A673 (cell line): ENCODE measurements at regions of chr12 and their contacts with region 1.

Region 1: DNA sequence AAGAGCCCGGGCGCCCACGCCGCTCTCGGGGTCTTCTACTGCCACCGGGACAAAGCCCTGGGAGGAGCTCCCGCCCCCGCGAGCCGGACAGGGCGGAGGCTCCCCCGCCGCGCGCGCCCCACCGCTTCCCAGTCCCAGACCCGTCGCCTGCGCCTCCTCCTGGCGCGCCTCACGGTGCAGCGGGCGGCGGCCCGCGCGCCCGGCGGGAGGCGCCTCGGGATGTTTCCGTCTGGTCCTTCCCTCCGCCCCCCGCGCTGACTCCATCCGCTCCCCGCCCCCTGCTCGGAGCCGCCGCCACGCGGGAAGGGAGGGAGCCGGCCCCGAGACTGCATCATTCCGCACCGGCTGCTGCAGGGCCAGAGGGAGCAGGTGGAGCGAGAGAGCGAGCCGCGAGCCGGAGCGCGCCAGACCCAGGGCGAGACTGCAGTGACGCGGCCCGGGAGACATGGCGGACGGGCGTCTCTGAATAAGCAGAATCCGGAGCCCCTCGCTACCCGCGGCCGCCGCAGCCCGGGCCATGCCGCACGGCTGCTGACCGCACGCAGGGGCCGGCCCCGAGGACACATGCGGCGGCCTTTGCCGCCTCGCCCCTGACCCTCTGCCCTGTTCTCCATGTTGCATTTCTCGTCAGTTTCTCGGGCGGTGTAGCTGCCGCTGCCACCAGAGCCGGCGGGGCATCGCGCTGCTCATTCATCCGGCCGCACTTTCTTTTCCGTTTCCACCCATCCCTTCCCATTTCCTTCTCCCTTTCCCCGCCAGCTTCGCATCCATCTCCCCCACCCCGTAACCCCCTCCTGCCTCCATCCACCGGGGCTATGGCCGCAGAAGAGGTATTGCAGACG is at the start of gene BICD1:
- DNase-seq: peak; percentile 93
- H3K4me3 ChIP-seq: peak within 1 kb of the TSS; percentile 79
- H3K27ac ChIP-seq: peak within 1 kb of the TSS; percentile 80
- H3K4me1 ChIP-seq: peaks cover 18% of the 10 kb centered on the region
- H3K27me3 ChIP-seq: no peaks in the 10 kb centered on the region
- CTCF ChIP-seq: peak; percentile 29
- total RNA-seq, gene BICD1: 45.4 and 50.2 TPM in 2 replicates

Region 2: GRCh38 chr12:31574803-31575575 is 531.7 kb before region 1 on chr12:
- CTCF ChIA-PET with region 1: no interaction called
- POLR2A ChIA-PET with region 1: no interaction called
- intact Hi-C with region 1: no loop called
- DNase-seq: no peak
- H3K4me3 ChIP-seq: no peak overlapping the region
- H3K27ac ChIP-seq: no peak overlapping the region
- H3K4me1 ChIP-seq: peaks cover 5% of the 10 kb centered on the region
- H3K27me3 ChIP-seq: no peaks in the 10 kb centered on the region
- CTCF ChIP-seq: no peak

Region 3: DNA sequence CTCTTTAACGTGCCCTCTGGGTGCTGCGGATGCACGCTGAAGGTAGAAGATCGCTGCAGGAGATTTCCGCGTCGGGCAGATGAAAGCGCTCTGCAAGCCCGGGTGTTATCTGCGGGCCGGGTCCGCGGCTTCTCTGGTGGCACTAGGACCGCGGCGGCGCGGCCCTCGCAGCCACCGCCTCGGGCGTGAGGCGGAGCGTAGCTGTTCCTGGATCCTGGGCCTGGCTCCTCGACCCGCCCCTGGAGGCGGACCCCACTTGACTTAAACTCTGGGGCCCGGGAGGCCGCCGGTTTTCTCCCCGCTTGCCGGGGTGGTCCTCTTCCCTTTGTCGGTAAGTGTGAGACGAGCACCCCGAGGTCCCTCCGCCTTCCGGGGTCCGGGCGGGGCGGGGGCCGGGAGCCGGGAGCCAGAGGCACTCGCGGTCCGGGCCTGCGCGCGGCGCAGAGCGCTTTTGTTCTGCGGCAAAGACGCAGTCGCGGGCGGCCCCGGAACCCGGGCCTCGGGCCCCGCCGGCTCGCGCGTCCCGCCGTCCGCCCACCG is 147.5 kb before region 1 on chr12 and contains the start of gene RESF1:
- CTCF ChIA-PET with region 1: no interaction called
- POLR2A ChIA-PET with region 1: no interaction called
- intact Hi-C with region 1: loop called (anchors 10 kb)
- DNase-seq: peak; percentile 95
- H3K4me3 ChIP-seq: peak within 1 kb of the TSS; percentile 60
- H3K27ac ChIP-seq: peak within 1 kb of the TSS; percentile 85
- H3K4me1 ChIP-seq: peaks cover 22% of the 10 kb centered on the region
- H3K27me3 ChIP-seq: no peaks in the 10 kb centered on the region
- CTCF ChIP-seq: 0 out of 2 replicates have a peak, but pooled peaks have one; percentile 4
- total RNA-seq, gene RESF1: 48.2 and 63.7 TPM in 2 replicates

Region 4: DNA sequence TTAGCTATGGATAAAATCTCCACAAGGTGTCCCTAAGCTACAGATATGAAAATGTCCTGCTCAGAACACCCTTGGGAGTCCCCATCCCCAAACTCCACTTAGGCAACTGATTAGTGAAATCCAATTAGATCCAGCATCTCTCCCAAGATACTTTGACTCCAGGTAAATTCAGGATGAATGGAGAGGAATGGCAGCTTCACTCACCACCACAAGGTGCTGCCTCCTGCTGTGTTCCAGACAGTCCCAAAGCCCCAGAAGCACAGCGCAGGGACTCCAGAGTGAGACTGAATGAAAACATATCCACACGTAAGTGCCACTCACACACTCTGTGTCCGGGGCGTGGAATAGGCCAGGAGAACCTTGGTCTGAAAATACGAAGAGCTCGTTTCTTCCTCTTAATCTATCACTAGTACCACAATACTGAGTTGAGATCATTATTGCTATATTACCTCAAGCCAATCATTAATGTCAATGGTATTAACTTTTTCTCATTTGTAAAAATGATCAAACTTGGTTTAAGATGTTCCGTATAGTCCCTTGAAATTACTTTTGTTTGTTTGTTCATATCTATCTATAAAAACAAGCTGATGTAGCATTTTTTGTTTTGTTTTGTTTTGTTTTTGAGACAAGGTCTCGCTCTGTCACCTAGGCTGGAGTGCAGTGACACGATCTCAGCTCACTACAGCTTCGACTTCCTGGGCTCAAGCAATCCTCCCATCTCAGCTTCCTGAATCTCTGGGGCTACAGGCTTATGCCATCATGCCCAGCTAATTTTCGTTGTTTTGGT is 70.1 kb before region 1 on chr12:
- CTCF ChIA-PET with region 1: no interaction called
- POLR2A ChIA-PET with region 1: interaction called, 16 read pairs
- intact Hi-C with region 1: no loop called
- DNase-seq: no peak
- H3K4me3 ChIP-seq: no peak overlapping the region
- H3K27ac ChIP-seq: no peak overlapping the region
- H3K4me1 ChIP-seq: no peaks in the 10 kb centered on the region
- H3K27me3 ChIP-seq: no peaks in the 10 kb centered on the region
- CTCF ChIP-seq: no peak

Region 5: GRCh38 chr12:32139064-32139421 is 32.3 kb after region 1 on chr12:
- CTCF ChIA-PET with region 1: no interaction called
- POLR2A ChIA-PET with region 1: no interaction called
- intact Hi-C with region 1: no loop called
- DNase-seq: peak; percentile 41
- H3K4me3 ChIP-seq: peak overlapping the region; percentile 51
- H3K27ac ChIP-seq: peak overlapping the region; percentile 82
- H3K4me1 ChIP-seq: peaks cover 18% of the 10 kb centered on the region
- H3K27me3 ChIP-seq: no peaks in the 10 kb centered on the region
- CTCF ChIP-seq: no peak

Region 6: DNA sequence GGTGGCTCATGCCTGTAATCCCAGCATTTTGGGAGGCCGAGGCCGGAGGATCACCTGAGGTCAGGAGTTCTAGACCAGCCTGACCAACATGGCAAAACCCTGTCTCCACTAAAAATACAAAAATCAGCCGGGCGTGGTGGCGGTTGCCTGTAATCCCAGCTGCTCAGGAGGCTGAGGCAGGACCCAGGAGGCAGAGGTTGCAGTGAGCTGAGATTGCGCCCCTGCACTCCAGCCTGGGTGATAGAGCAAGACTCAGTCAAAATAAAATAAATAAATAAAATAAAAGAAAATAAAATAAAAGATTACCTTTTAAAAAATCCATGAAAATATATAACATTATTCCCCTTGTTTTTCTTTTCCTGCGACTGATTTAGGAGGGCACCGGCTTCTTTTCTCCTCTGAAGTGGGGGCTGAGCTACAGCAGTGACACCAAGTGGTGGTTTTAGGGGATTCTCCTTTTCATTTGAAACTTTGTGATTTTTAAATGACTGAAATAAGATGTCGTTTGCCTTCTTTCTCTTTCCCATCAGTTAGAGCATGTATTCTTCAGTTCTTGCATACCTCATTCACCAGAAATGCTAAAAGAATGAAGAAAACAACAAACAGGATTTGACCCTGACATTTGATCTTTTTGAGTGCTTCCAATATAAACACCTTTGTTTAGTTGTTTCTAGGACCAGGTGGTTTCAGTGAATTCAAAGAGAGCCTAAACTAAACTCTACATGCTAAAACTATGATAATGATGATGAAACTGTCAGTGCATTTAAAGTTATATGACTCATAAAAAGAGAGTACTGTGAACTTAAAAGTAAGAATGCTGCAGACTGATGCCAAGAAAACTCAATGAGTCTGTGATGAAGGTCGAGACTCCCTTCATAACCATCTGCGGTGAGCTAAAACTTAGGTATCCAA is 812.4 kb after region 1 on chr12:
- CTCF ChIA-PET with region 1: no interaction called
- POLR2A ChIA-PET with region 1: no interaction called
- intact Hi-C with region 1: no loop called
- DNase-seq: peak; percentile 54
- H3K4me3 ChIP-seq: no peak overlapping the region
- H3K27ac ChIP-seq: no peak overlapping the region
- H3K4me1 ChIP-seq: no peaks in the 10 kb centered on the region
- H3K27me3 ChIP-seq: no peaks in the 10 kb centered on the region
- CTCF ChIP-seq: peak; percentile 66